ENCODE measurements at regions of chr22 and their contacts with region 1.

Region 1: DNA sequence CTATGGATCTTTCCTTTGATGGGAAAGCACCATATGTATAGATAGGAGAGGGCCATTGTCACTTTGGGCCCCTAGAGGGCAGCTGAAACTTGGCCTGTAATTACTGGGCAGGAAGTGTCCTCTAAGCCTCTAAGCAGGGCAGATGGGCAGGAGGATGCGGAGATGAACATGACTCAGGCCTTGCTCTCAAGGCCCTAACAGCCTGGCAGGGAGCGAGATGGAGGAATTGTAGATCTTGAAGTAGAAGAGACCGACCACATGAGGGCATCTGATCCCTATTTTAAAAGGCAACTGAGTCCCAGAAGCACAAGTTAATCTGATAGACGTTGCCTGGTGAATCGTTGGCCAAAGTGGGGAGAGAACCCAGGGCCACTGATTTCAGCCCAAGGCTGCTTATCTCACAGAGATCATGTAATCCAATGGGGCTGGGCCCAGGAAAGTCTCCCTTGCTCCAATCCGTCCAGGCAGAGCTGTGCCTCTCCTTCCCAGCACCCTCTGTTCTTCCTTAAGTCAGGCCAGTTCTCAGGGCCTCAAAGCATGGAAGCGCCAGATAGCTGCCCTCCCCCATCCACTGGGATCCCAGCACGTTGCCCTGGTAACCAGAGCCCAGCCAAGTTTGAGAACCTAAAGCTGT is 2.5 kb upstream of the SEPTIN3 start:
- DNase-seq: no peak
- ATAC-seq: peak in 3 of 4 donors; percentile 58 to 72 (median 67)
- H3K4me3 ChIP-seq: no peak overlapping the region
- H3K27ac ChIP-seq: no peak overlapping the region
- H3K4me1 ChIP-seq: no peaks in the 10 kb centered on the region
- H3K27me3 ChIP-seq: peaks cover 0 to 11% (median 0%) of the 10 kb centered on the region in 9 donors
- CTCF ChIP-seq: peak in 11 of 12 donors; percentile 11 to 44 (median 32)
- POLR2A ChIP-seq: no peak

Region 2: GRCh38 chr22:41907436-41908401 is 59.0 kb before region 1 on chr22:
- intact Hi-C with region 1: loop called in 1 of 10 experiments (anchors 1 kb)
- DNase-seq: no peak
- ATAC-seq: no peak
- H3K4me3 ChIP-seq: no peak overlapping the region
- H3K27ac ChIP-seq: peak overlapping the region in 1 of 12 donors; percentile 25
- H3K4me1 ChIP-seq: peaks cover 0 to 46% (median 23%) of the 10 kb centered on the region in 12 donors
- H3K27me3 ChIP-seq: peaks cover 1 to 33% (median 17%) of the 10 kb centered on the region in 9 donors
- CTCF ChIP-seq: no peak
- POLR2A ChIP-seq: no peak

Region 3: GRCh38 chr22:42080287-42080686 is 113.6 kb after region 1 on chr22:
- intact Hi-C with region 1: no loop called
- DNase-seq: no peak
- ATAC-seq: peak in 1 of 4 donors; percentile 16
- H3K4me3 ChIP-seq: peak overlapping the region; percentile 38 to 82 (median 70)
- H3K27ac ChIP-seq: peak overlapping the region; percentile 95 to 99 (median 98)
- H3K4me1 ChIP-seq: peaks cover 2 to 57% (median 32%) of the 10 kb centered on the region in 12 donors
- H3K27me3 ChIP-seq: no peaks in the 10 kb centered on the region
- CTCF ChIP-seq: no peak
- POLR2A ChIP-seq: no peak

Region 4: DNA sequence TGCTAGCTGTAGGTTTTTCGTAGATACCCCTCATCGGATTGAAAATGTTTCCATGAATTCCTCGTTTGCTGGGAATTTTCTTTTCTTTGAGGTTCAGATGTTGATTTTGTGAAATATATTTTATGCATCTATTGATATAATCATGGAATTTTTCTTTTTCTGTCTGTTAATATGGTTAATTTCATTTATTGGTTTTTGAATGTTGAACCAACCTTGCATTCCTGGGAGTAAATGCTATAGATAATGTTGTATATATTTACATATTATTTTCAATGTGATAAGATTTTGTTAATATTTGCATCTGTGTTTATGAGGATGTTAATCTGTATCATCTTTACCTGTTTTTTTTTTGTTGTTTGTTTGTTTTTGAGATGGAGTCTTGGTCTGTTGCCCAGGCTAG is 134.5 kb after region 1 on chr22:
- intact Hi-C with region 1: loop called in 1 of 10 experiments (anchors 10 kb)
- DNase-seq: no peak
- ATAC-seq: no peak
- H3K4me3 ChIP-seq: no peak overlapping the region
- H3K27ac ChIP-seq: no peak overlapping the region
- H3K4me1 ChIP-seq: no peaks in the 10 kb centered on the region
- H3K27me3 ChIP-seq: no peaks in the 10 kb centered on the region
- CTCF ChIP-seq: no peak
- POLR2A ChIP-seq: no peak

Region 5: GRCh38 chr22:42114721-42115120 is 148.0 kb after region 1 on chr22:
- intact Hi-C with region 1: loop called in 5 of 10 experiments (anchors 5 to 10 kb)
- DNase-seq: no peak
- ATAC-seq: no peak
- H3K4me3 ChIP-seq: no peak overlapping the region
- H3K27ac ChIP-seq: no peak overlapping the region
- H3K4me1 ChIP-seq: no peaks in the 10 kb centered on the region
- H3K27me3 ChIP-seq: no peaks in the 10 kb centered on the region
- CTCF ChIP-seq: peak in 8 of 12 donors; percentile 12 to 39 (median 20)
- POLR2A ChIP-seq: no peak

Region 6: GRCh38 chr22:42437488-42438292 is 471.0 kb after region 1 on chr22:
- intact Hi-C with region 1: loop called in 8 of 10 experiments (anchors 5 to 10 kb)
- DNase-seq: peak; percentile 72 to 90 (median 78)
- ATAC-seq: peak; percentile 72 to 85 (median 84)
- H3K4me3 ChIP-seq: peak overlapping the region in 11 of 12 donors; percentile 3 to 57 (median 49)
- H3K27ac ChIP-seq: peak overlapping the region in 2 of 12 donors; percentile 12 to 66
- H3K4me1 ChIP-seq: peaks cover 0 to 76% (median 16%) of the 10 kb centered on the region in 12 donors
- H3K27me3 ChIP-seq: peaks cover 0 to 25% (median 3%) of the 10 kb centered on the region in 9 donors
- CTCF ChIP-seq: peak; percentile 86 to 98 (median 96)
- POLR2A ChIP-seq: no peak

Region 7: GRCh38 chr22:42444077-42444904 is 477.6 kb after region 1 on chr22:
- intact Hi-C with region 1: loop called in 8 of 10 experiments (anchors 5 to 10 kb)
- DNase-seq: peak; percentile 77 to 88 (median 82)
- ATAC-seq: peak; percentile 53 to 85 (median 83)
- H3K4me3 ChIP-seq: peak overlapping the region in 11 of 12 donors; percentile 12 to 55 (median 47)
- H3K27ac ChIP-seq: peak overlapping the region in 10 of 12 donors; percentile 59 to 84 (median 67)
- H3K4me1 ChIP-seq: peaks cover 0 to 40% (median 21%) of the 10 kb centered on the region in 12 donors
- H3K27me3 ChIP-seq: peaks cover 0 to 4% (median 0%) of the 10 kb centered on the region in 9 donors
- CTCF ChIP-seq: peak; percentile 44 to 72 (median 60)
- POLR2A ChIP-seq: no peak